ENCODE measurements at regions of chr1 and their contacts with region 1.

Region 1: GRCh38 chr1:235077571-235078479 is 50.8 kb downstream of the TOMM20 start:
- DNase-seq: no peak
- H3K4me3 ChIP-seq: no peak overlapping the region
- CTCF ChIP-seq: no peak

Region 2: GRCh38 chr1:234599617-234600417 is 478.0 kb before region 1 on chr1:
- CTCF ChIA-PET with region 1: interaction called, 18 read pairs
- POLR2A ChIA-PET with region 1: no interaction called
- DNase-seq: no peak
- H3K4me3 ChIP-seq: peak overlapping the region; percentile 61
- CTCF ChIP-seq: no peak

Region 3: GRCh38 chr1:234978397-234979295 is 99.2 kb before region 1 on chr1:
- CTCF ChIA-PET with region 1: interaction called, 11 read pairs
- POLR2A ChIA-PET with region 1: interaction called, 3 read pairs
- DNase-seq: no peak
- H3K4me3 ChIP-seq: no peak overlapping the region
- CTCF ChIP-seq: no peak

Region 4: GRCh38 chr1:235022981-235023710 is 54.7 kb before region 1 on chr1:
- CTCF ChIA-PET with region 1: no interaction called
- POLR2A ChIA-PET with region 1: no interaction called
- DNase-seq: no peak
- H3K4me3 ChIP-seq: no peak overlapping the region
- CTCF ChIP-seq: no peak

Region 5: GRCh38 chr1:235060607-235061470 is 17.0 kb before region 1 on chr1:
- CTCF ChIA-PET with region 1: no interaction called
- POLR2A ChIA-PET with region 1: no interaction called
- DNase-seq: no peak
- H3K4me3 ChIP-seq: no peak overlapping the region
- CTCF ChIP-seq: no peak

Measured in AG04449 (cell line).